ENCODE measurements at regions of chr14 and their contacts with region 1.

Region 1: GRCh38 chr14:75069045-75069810 is at the start of gene ZC2HC1C:
- DNase-seq: peak; percentile 97 to 99
- ATAC-seq: peak; percentile 94 to 98 (median 96)
- H3K4me3 ChIP-seq: peak within 1 kb of the TSS; percentile 13 to 69 (median 61)
- H3K27ac ChIP-seq: peak within 1 kb of the TSS; percentile 90 to 98 (median 94)
- H3K4me1 ChIP-seq: peaks cover 5 to 68% (median 37%) of the 10 kb centered on the region in 9 donors
- H3K27me3 ChIP-seq: no peaks in the 10 kb centered on the region
- CTCF ChIP-seq: peak in 3 of 9 donors; percentile 4 to 21 (median 8)
- total RNA-seq, gene ZC2HC1C: 4.6 to 12.4 (median 8.9) TPM

Region 2: DNA sequence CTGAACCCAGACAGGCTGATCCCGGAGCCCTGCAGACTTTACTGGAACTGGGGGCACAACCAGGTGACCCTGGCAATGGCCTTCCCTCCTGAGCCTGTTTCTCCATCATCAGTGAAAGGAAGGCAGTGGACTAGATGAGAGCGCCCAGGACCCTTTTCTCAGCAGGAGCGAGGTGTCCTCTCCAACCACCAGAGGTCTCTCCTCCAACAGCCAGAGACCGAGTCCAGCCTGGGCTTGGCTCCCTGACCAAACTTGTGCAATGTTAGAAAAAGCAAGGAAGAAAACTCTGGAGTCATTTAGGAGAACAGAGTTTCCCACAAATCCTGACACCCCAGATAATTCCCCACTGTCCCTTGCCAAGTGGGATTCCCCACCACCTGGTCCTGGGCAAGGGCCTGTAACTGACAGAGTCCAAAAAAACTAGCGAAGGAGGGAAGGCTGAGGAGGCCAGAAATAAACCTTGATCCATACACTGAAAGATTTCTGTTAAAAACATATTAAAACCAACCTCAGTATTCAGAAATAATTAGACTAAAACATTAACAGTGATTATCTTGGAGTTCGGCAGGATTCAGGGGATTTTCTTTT is 155.1 kb before region 1 on chr14:
- intact Hi-C with region 1: loop called in 1 of 10 experiments (anchors 5 kb)
- DNase-seq: peak; percentile 64 to 82
- ATAC-seq: peak; percentile 38 to 72 (median 64)
- H3K4me3 ChIP-seq: no peak overlapping the region
- H3K27ac ChIP-seq: peak overlapping the region in 8 of 10 donors; percentile 8 to 90 (median 56)
- H3K4me1 ChIP-seq: peaks cover 25 to 69% (median 49%) of the 10 kb centered on the region in 9 donors
- H3K27me3 ChIP-seq: no peaks in the 10 kb centered on the region
- CTCF ChIP-seq: peak; percentile 52 to 91 (median 81)

Region 3: DNA sequence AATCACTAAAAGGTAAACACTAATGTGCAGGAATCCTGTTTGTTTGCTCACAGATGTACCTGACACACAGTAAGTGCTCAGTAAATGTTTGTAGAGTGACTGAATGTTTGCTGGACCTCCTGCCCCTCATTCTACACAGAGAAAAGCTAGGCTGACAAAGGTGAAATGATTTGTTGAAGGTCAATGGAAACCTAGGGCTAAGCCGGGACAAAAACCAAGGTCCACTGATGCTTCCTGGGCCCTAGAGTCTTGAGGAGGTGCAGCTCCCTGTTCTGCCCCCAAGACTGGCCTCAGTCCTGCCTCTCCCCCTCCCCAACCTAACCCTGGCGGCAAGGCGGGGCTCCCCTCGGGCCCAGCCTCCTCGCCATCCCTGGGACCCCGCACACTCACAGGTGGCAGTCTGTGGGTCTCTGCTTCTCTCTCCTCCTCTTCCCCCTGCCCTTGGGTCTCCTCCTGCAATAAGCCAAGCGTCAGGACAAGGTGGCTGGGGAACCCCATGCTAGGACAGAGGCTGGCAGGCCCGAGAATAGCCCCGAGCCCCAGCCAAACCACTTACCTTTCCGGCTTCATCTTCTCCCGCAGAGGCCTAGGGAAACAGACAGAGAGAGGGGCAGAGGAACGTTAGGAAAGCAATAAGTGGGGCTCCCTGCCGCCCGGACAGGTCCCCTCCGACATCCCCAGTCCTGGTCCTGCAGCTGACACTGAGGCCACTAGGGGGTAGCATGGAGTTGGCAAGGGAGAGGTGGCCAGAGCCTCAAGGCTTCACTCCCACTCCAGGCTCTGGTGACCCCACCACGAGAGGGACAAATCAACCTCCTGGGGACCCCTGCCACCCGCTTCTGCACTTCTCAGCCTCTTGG is 123.2 kb before region 1 on chr14:
- intact Hi-C with region 1: loop called in 3 of 10 experiments (anchors 5 kb)
- DNase-seq: peak; percentile 76 to 83
- ATAC-seq: peak; percentile 74 to 86 (median 81)
- H3K4me3 ChIP-seq: peak overlapping the region in 3 of 10 donors; percentile 4 to 21 (median 17)
- H3K27ac ChIP-seq: peak overlapping the region in 7 of 10 donors; percentile 8 to 76 (median 54)
- H3K4me1 ChIP-seq: peaks cover 14 to 72% (median 44%) of the 10 kb centered on the region in 9 donors
- H3K27me3 ChIP-seq: peaks cover 0 to 4% (median 0%) of the 10 kb centered on the region in 7 donors
- CTCF ChIP-seq: peak; percentile 89 to 96 (median 95)

Region 4: DNA sequence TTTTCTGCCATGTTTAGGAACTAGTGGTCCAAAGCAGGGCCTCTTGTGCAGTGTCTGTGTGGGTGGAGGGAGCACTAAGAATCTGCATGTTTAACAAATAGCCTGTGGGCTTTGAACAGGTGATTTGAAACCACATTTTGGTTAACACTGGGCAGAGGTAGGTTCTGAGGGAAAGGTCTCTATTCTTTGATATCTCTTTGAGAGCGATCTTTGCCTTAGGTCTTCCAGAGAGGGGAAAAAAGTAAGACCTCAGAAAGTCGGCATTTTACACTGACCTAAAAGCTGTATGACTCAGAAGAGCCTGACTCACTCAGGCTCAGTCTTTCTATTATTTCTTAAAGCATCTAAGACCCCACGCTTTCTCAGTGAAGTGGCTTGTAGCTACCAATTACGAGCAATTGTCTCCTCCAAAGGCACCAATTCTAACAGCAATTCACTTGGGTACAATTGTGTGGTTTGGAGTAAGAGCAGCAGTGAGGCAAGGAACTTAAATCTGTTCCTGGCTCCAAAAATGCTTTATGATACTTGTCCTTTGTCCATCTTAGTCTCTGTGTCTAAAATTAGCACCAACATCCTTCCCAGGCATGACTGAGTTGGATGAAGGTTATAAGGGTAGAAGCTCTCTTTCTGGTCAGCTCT is 57.8 kb before region 1 on chr14:
- intact Hi-C with region 1: loop called in 3 of 10 experiments (anchors 10 kb)
- DNase-seq: no peak
- ATAC-seq: peak; percentile 53 to 78 (median 69)
- H3K4me3 ChIP-seq: no peak overlapping the region
- H3K27ac ChIP-seq: peak overlapping the region in 9 of 10 donors; percentile 20 to 78 (median 65)
- H3K4me1 ChIP-seq: peaks cover 3 to 40% (median 32%) of the 10 kb centered on the region in 9 donors
- H3K27me3 ChIP-seq: no peaks in the 10 kb centered on the region
- CTCF ChIP-seq: no peak

Region 5: DNA sequence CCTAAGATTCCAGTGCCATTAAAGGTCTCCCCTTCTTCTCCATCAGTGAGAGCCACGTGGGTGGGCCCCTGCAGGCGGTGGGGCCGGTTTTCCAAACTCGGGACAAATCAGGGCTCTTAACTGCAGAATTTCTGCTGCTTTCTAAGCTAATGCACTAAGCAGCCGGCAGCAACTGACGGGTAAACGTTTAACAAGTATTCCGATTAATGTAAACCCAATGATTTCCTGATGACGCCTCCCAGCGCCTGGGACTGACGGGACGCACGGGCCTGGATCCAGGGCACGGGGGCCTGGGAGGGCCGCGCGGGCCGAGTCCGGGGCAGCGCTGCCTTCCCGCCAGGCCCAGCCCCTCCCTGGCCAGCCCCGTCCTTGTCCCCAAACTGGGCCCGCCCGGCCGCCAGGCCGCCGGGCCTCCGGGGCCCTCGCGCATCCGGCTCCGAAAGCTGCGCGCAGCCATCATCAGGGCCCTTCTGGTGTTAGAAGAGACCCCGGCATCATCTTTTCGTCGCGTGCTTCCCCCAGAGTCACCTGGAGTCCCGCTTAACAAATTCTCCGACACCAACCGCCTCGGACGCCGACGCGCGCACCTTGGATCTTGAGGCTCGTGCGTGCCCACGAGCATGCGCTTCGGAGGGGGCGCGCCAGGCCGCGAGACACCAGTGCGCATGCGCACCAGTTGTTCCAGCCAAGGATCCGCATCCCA is 18.2 kb before region 1 on chr14 and contains the start of gene MLH3:
- intact Hi-C with region 1: loop called in 1 of 10 experiments (anchors 2 kb)
- DNase-seq: peak; percentile 81 to 89
- ATAC-seq: peak; percentile 89 to 97 (median 95)
- H3K4me3 ChIP-seq: peak within 1 kb of the TSS; percentile 47 to 74 (median 66)
- H3K27ac ChIP-seq: peak within 1 kb of the TSS; percentile 80 to 93 (median 90)
- H3K4me1 ChIP-seq: peaks cover 0 to 36% (median 21%) of the 10 kb centered on the region in 9 donors
- H3K27me3 ChIP-seq: no peaks in the 10 kb centered on the region
- CTCF ChIP-seq: peak in 3 of 9 donors; percentile 13 to 21 (median 14)
- total RNA-seq, gene MLH3: 14.7 to 21.6 (median 18.7) TPM

Measured in heart right ventricle (tissue), 16 donors.